ENCODE measurements at regions of chr17 and their contacts with region 1.

Region 1: GRCh38 chr17:57995076-57995956 is 7.3 kb upstream of the VEZF1 start:
- DNase-seq: no peak
- H3K4me3 ChIP-seq: no peak overlapping the region
- H3K27ac ChIP-seq: no peak overlapping the region
- H3K4me1 ChIP-seq: peaks cover 0 to 9% (median 0%) of the 10 kb centered on the region in 4 experiments; a peak in 1 of 7 replicates
- H3K27me3 ChIP-seq: no peaks in the 10 kb centered on the region
- CTCF ChIP-seq: peak; percentile 17 to 74 (median 67)
- EP300 ChIP-seq: no peak
- POLR2A ChIP-seq: peak; percentile 50 to 76
- RAD21 ChIP-seq: peak; percentile 79 to 84

Region 2: DNA sequence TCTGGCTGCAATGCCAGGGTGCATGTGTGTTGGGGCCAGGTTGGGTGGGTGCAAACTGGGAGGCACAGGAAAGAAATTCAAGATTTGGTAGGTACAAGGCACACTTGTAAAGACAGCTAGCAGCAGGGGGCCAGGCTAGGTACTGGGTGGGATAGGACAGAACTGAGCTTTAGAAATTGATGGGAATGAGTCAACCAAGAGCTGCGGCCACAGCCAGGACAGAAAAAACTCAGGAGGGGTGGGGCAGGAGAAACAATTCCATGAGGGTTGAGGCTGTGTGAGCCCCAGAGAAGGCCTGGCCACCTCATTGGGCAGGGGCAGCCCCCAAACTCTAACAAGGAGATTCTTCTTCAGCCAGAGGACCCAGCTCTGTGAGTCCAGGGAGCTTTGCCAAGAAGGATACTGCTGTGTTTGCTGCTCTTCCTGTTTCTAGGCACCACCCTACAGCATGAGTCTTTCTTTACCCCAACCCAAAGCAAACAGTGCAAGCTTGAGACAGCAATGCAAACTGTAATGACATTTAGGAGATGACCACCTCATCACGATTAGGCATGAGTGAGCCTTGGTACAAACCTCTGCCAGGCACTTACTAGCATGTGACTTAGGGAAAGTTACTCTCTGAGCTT is 228.9 kb before region 1 on chr17:
- CTCF ChIA-PET with region 1: no interaction called
- POLR2A ChIA-PET with region 1: no interaction called
- DNase-seq: no peak
- H3K4me3 ChIP-seq: no peak overlapping the region
- H3K27ac ChIP-seq: no peak overlapping the region
- H3K4me1 ChIP-seq: peaks cover 3 to 12% (median 7%) of the 10 kb centered on the region in 4 experiments
- H3K27me3 ChIP-seq: no peaks in the 10 kb centered on the region
- CTCF ChIP-seq: no peak
- EP300 ChIP-seq: no peak
- POLR2A ChIP-seq: no peak
- RAD21 ChIP-seq: no peak

Region 3: GRCh38 chr17:57823469-57824401 is 171.6 kb before region 1 on chr17:
- CTCF ChIA-PET with region 1: no interaction called
- POLR2A ChIA-PET with region 1: no interaction called
- DNase-seq: no peak
- H3K4me3 ChIP-seq: no peak overlapping the region
- H3K27ac ChIP-seq: no peak overlapping the region
- H3K4me1 ChIP-seq: no peaks in the 10 kb centered on the region; a peak in 1 of 7 replicates
- H3K27me3 ChIP-seq: no peaks in the 10 kb centered on the region; a peak in 1 of 7 replicates
- CTCF ChIP-seq: no peak
- EP300 ChIP-seq: no peak
- POLR2A ChIP-seq: no peak
- RAD21 ChIP-seq: no peak

Region 4: DNA sequence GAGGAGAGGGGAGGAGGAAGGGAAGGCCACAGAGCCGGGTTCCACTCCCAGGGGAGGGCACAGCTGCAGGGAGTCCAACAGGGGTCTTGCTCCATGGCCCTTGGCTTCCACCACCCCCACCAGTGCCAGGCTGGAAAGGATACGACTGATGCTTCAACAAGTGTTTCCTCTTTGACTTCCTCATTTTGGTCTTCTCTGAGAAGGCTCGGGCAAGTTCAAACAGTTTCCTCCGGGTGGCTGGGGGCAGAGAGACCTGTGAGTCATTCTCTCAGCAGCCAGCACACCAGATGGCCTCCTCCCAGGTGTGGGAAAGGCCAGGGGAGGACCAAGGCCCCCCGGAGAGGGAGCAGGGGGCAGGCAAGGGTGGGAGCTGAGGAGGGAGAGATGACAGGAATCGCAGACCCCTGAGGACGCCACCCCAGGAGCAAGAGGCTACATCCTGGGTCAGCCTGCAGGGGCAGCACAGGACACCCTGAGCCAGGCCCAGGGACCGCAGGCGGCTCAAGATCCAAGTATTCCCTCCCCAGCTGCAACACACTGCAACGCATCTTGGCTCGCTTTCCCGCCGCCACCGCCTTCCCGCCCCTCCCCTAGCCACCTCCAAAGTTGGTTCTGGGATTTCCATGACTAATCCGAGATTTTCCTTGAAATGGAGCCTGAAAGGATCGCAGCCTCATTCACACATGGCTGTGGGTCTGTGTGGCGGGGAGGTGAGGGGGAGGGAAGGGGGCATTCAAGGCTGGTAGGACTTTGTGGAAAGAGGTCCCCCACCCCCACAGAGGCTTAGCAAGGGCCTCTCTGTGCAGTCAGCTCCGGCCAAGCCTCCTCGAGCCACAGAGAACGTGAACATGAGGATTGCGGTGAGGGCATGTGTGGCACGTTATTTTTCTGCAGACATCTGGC is 127.1 kb before region 1 on chr17:
- CTCF ChIA-PET with region 1: interaction called, 384 read pairs
- POLR2A ChIA-PET with region 1: interaction called, 672 read pairs
- DNase-seq: peak; percentile 58 to 71
- H3K4me3 ChIP-seq: no peak overlapping the region
- H3K27ac ChIP-seq: no peak overlapping the region
- H3K4me1 ChIP-seq: peaks cover 0 to 17% (median 10%) of the 10 kb centered on the region in 4 experiments; a peak in 6 of 7 replicates
- H3K27me3 ChIP-seq: no peaks in the 10 kb centered on the region; a peak in 2 of 7 replicates
- CTCF ChIP-seq: peak; percentile 65 to 79 (median 73)
- EP300 ChIP-seq: no peak
- POLR2A ChIP-seq: no peak
- RAD21 ChIP-seq: peak; percentile 65 to 68

Region 5: GRCh38 chr17:57902800-57903759 is 92.2 kb before region 1 on chr17:
- CTCF ChIA-PET with region 1: interaction called, 36 read pairs
- POLR2A ChIA-PET with region 1: interaction called, 11 read pairs
- DNase-seq: no peak
- H3K4me3 ChIP-seq: no peak overlapping the region
- H3K27ac ChIP-seq: no peak overlapping the region
- H3K4me1 ChIP-seq: peaks cover 5 to 36% (median 26%) of the 10 kb centered on the region in 4 experiments
- H3K27me3 ChIP-seq: no peaks in the 10 kb centered on the region
- CTCF ChIP-seq: no peak
- EP300 ChIP-seq: no peak
- POLR2A ChIP-seq: no peak
- RAD21 ChIP-seq: no peak

Region 6: GRCh38 chr17:57970706-57971105 is 24.6 kb before region 1 on chr17:
- CTCF ChIA-PET with region 1: interaction called, 14 read pairs
- POLR2A ChIA-PET with region 1: interaction called, 6 read pairs
- DNase-seq: no peak
- H3K4me3 ChIP-seq: no peak overlapping the region
- H3K27ac ChIP-seq: no peak overlapping the region
- H3K4me1 ChIP-seq: peaks cover 0 to 3% (median 0%) of the 10 kb centered on the region in 4 experiments; a peak in 3 of 7 replicates
- H3K27me3 ChIP-seq: no peaks in the 10 kb centered on the region
- CTCF ChIP-seq: no peak
- EP300 ChIP-seq: no peak
- POLR2A ChIP-seq: no peak
- RAD21 ChIP-seq: no peak

Region 7: DNA sequence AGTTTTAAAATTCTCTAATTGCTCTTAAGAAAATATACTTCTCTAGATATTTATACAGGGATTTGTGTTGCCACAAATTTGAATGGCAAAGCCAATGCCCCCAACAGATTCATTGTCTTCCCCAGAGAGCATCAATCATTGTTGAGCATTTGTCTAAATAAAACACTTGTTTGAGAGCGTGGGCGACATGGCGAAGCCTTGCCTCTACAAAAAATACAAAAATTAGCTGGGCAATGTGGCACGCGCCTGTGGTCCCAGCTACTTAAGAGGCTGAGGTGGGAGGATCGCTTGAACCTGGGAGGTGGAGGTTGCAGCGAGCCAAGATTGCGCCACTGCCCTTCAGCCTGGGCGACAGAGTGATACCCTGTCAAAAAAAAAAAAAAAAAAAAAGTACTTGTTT is 25.1 kb after region 1 on chr17:
- CTCF ChIA-PET with region 1: interaction called, 4 read pairs
- POLR2A ChIA-PET with region 1: interaction called, 18 read pairs
- DNase-seq: no peak
- H3K4me3 ChIP-seq: no peak overlapping the region
- H3K27ac ChIP-seq: no peak overlapping the region
- H3K4me1 ChIP-seq: peaks cover 0 to 6% (median 2%) of the 10 kb centered on the region in 4 experiments; a peak in 2 of 7 replicates
- H3K27me3 ChIP-seq: no peaks in the 10 kb centered on the region
- CTCF ChIP-seq: no peak
- EP300 ChIP-seq: no peak
- POLR2A ChIP-seq: no peak
- RAD21 ChIP-seq: no peak

Region 8: DNA sequence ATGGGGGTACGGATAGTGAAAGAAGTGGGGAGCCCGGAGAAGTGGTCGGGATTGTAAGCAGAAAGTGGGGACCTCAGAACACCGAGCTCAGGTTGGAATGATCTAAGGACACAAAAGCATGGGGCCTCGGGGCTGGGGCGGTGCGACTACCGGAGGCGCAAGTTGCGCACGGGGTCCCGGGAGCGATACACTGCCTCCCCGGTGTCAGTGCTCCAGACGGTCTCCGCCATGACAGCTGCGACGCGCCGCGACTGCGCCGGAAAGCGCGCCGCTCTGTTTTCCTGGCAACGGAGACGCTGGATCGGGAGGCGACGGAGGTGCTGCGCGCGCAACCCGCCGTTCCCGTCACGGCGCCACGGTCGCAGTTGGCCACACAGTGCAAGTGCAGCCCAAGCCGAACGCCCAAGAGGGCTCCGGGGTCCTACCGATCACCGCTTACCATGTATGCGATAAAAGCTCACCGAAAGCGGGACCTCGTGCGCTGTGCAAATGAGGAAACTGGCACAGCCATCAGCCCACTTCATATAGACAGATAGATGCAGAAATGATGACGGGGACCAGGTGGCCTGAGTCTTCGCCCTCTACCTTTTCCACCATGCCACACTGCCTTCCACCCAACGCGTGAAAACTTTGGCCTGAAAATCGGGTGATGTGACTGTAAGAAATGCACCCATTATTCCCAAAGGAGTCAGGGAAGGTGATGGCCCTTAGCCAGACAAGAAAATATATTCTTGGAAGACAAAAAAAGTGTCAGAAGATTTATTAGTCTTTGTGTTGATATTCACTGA is 223.9 kb after region 1 on chr17 and contains the start of gene MKS1:
- CTCF ChIA-PET with region 1: no interaction called
- POLR2A ChIA-PET with region 1: no interaction called
- DNase-seq: peak; percentile 84 to 97
- H3K4me3 ChIP-seq: peak within 1 kb of the TSS; percentile 50 to 91 (median 81)
- H3K27ac ChIP-seq: no peak within 1 kb of the TSS
- H3K4me1 ChIP-seq: peaks cover 0 to 3% (median 0%) of the 10 kb centered on the region in 4 experiments; a peak in 2 of 7 replicates
- H3K27me3 ChIP-seq: no peaks in the 10 kb centered on the region
- CTCF ChIP-seq: peak; percentile 59 to 78 (median 73)
- EP300 ChIP-seq: no peak
- POLR2A ChIP-seq: peak; percentile 60 to 84
- RAD21 ChIP-seq: peak in 1 of 2 experiments; percentile 36; a peak in 3 of 4 replicates
- total RNA-seq, gene MKS1: 20.6 and 21.7 TPM in 2 replicates

Region 9: DNA sequence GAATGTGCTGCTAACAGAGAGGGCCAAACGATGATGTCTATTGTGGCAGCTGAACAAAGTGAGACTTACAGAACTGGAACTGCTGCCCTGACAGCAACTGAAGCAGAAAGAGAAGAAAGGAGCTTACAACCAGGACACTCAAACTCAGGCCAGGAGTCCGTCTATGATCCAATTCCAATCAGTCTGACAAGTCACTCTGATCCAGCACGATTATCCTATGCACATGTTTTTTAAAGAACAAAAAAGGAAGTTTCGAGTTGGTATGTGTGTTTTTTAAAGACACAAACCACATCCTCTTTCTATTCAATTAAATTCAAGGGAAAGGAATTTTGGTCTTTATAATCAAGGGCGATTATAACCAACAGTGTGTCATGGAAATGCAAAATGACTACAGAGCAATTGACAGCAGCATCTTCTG is 561.5 kb after region 1 on chr17:
- CTCF ChIA-PET with region 1: no interaction called
- POLR2A ChIA-PET with region 1: no interaction called
- DNase-seq: no peak
- H3K4me3 ChIP-seq: no peak overlapping the region
- H3K27ac ChIP-seq: no peak overlapping the region
- H3K4me1 ChIP-seq: no peaks in the 10 kb centered on the region
- H3K27me3 ChIP-seq: no peaks in the 10 kb centered on the region
- CTCF ChIP-seq: no peak
- EP300 ChIP-seq: no peak
- POLR2A ChIP-seq: no peak
- RAD21 ChIP-seq: no peak